ENCODE measurements at regions of chr19 and their contacts with region 1.

Region 1: GRCh38 chr19:7199613-7200533 is 94.3 kb downstream of the INSR start:
- DNase-seq: no peak
- ATAC-seq: peak; percentile 23

Region 2: DNA sequence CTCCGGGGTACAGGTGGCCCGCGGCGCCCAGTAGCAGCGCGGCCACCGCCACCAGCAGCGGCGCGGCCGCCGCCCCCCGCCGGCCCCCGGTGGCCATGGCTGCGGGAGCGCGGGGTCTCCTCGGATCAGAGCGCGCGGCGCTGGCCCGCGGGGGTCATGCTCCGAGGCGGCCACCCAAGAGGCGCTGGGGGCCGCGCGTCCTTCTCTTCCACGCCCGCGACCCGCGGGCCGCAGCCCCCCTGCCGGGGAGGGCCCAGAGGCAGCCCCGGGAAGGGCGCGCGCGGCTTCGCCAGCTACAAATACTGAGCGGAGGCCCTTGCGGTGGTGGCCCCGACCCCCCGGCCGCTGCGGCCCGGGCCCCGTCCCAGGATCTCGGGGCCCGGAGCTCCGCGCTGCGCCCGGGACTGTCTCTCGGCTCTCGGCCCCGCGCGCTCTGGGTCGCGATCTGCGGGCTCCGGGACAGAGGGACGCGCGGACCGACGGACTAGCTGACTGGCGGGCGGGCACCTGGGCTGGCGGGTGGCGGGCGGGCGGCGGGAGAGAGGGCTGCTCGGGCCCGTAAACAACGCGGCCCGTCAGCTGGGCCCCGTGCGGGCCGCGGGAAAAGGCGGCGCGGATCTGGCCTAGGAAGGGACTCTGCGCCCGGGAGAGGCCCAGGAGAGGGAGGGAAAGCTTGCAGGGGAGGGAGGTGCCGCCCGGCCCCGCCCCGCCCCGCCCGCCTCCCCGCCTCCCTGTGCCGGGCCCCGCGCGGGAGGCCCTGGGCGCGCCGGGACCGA is 94.1 kb after region 1 on chr19 and contains the start of gene INSR:
- intact Hi-C with region 1: loop called (anchors 5 kb)
- DNase-seq: peak; percentile 93
- ATAC-seq: peak; percentile 95
- total RNA-seq, gene INSR: 62.6 TPM

Measured in left ventricle myocardium superior (tissue), 1 donor.